ENCODE measurements at regions of chr17 and their contacts with region 1.

Region 1: DNA sequence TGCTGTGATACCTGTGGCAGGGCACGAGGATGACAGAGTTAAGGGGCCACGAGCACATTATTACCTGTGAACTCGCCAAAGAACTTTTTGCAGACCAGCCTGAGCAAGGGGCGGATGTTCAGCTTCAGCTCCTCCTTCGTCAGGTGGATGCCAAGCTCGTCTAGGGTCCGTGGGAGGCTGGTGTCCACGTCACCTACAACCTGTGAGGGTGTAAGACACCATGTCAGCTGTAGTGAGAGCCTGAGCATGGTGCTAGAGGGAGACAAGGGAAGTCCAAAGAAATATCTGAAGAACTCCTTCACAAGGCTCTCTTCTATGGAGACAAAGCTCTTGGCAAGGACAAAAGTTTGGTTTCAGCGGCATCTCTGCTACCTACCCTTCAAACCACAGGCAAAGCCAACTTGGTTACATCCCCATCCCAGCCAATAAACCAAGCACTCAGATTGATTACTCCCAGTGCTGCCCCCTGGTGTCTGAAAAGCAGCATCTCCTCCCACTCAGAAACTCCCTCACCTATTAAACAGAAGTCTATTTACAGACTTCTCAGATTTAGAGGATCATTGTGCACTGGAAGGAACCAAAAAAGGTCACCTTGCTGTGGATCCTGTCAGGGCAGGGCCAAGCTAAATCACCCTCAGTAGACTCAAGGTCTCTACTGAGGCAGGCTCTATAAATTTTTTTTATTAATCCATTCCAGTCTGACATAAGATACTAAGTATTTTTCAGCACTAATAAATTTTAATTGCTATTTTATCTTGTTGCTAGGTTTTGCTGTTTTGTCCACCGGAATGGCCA is 17.4 kb downstream of the HIGD1B start:
- DNase-seq: peak; percentile 82 to 88
- ATAC-seq: peak; percentile 80 to 88
- H3K4me3 ChIP-seq: no peak overlapping the region
- H3K27ac ChIP-seq: no peak overlapping the region
- H3K4me1 ChIP-seq: no peaks in the 10 kb centered on the region
- CTCF ChIP-seq: peak; percentile 98
- EP300 ChIP-seq: no peak
- POLR2A ChIP-seq: no peak
- RAD21 ChIP-seq: peak; percentile 77 to 78

Region 2: DNA sequence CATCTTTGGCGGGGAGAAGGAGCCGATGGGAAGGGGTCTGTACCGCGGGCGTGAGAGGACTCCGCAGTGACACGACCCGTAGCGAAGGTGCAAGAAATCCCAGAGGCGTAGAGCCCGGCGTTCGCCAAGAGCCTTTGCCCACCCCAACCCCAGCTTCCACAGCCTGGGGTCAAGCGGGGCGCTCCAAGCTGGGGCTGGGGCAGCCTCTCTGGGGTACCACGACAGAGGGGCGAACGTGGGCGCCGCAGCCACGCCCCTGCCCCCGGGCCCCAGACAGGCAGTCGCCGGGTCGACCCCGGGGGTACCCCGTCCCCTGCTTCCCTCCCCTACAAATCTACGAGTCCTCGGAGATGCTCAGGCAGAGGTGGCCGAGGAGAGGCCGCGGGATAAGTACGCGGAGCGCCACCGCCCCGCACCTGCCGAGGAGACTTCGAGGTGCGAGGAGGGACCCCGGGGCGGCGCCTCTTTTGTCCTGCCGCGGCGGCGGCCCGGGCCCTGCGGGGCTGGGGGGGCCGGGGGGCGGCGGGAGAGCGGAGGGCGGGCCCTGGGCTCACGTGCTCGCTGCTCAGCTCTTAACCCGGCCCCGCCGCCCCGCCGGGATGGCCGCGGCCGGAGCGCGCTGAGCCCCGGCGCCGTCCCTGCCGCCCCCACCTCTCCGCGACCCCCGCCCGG is 106.5 kb before region 1 on chr17 and contains the start of gene ADAM11:
- CTCF ChIA-PET with region 1: interaction called, 1,787 read pairs
- POLR2A ChIA-PET with region 1: no interaction called
- DNase-seq: peak in 1 of 2 experiments; percentile 74
- ATAC-seq: peak; percentile 39 to 58
- H3K4me3 ChIP-seq: peak within 1 kb of the TSS; percentile 64
- H3K27ac ChIP-seq: peak within 1 kb of the TSS; percentile 62 to 89; a peak in 5 of 6 replicates
- H3K4me1 ChIP-seq: peaks cover 10% of the 10 kb centered on the region; the same call in 1 of the 3 replicates
- CTCF ChIP-seq: no peak
- EP300 ChIP-seq: no peak
- POLR2A ChIP-seq: no peak
- RAD21 ChIP-seq: no peak
- polyA plus RNA-seq, gene ADAM11: 0.75 and 0.79 TPM in 2 replicates

Region 3: DNA sequence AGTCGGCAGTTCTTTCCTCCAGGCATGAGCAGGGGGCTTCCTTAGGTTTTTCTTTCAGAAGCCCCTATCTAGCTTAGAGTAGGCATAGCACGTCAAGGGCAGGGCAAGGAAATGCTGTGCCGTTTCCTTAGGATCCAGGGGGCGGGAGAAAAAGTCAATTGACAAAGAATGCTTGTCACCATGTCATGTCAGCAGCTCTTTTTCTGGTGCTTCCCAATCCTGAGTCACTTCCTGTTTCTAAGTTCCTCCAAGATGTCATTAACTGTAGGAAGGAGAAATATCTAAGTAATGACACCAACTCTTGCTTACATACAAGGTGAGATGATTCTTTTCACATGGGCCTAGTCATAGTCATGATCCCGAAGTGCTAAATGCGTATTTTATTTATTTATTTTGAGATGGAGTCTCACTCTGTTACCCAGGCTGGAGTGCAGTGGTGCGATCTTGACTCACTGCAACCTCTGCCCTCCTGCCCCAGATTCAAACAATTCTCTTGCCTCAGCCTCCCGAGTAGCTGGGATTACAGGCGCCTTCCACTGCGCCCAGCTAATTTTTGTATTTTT is 70.1 kb before region 1 on chr17:
- CTCF ChIA-PET with region 1: interaction called, 1,787 read pairs
- POLR2A ChIA-PET with region 1: no interaction called
- DNase-seq: peak; percentile 56 to 84
- ATAC-seq: peak; percentile 81 to 83
- H3K4me3 ChIP-seq: no peak overlapping the region
- H3K27ac ChIP-seq: peak overlapping the region; percentile 28 to 78; a peak in 5 of 6 replicates
- H3K4me1 ChIP-seq: peaks cover 18% of the 10 kb centered on the region
- CTCF ChIP-seq: no peak
- EP300 ChIP-seq: no peak
- POLR2A ChIP-seq: no peak
- RAD21 ChIP-seq: no peak

Region 4: GRCh38 chr17:44812263-44812662 is 52.8 kb before region 1 on chr17:
- CTCF ChIA-PET with region 1: interaction called, 25 read pairs
- POLR2A ChIA-PET with region 1: no interaction called
- DNase-seq: no peak
- ATAC-seq: no peak
- H3K4me3 ChIP-seq: no peak overlapping the region
- H3K27ac ChIP-seq: no peak overlapping the region
- H3K4me1 ChIP-seq: peaks cover 20% of the 10 kb centered on the region
- CTCF ChIP-seq: no peak
- EP300 ChIP-seq: no peak
- POLR2A ChIP-seq: no peak
- RAD21 ChIP-seq: no peak

Region 5: DNA sequence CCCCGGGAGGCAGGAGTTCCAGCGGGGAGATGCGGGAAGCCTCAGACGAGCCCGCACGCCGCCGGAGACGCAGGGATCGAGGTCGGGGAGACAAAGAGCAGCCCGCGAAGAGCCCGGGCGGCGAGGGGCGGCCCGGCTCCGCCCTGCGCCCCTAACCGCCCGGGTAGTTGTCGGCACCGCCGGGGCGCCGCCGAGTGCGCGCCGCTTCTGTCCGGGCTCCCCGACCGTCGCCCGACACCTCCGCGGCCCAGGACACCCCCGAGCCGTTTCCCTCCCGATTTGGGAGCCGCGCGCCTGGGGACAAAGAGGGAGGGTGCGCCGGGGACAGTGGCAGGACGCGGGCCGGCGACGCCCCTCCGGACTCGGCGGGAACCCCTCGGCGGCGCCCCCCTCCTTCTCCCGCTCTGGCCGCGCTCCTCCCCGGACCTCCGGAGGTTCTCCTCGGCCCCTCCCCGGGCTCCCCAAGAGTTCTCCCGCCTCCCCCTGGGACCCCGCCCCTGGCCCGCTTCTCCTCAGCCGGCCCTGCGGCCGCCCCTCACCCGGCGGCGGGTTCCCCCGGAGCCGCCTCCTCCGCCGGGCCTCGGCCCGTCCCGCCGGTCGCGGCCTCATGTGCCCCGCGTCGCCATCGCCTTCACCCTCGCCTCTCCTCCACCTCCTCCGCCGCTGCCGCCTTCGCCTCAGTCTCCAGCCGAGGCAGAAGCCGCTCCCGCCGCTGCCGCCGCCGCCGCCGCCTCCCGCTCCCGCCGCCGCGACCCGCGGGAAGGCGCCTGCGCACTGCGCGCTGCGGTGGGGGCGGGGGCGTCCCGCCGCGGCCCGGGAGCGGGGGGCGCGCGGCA is 35.3 kb before region 1 on chr17 and contains the start of gene GJC1:
- CTCF ChIA-PET with region 1: interaction called, 21 read pairs
- POLR2A ChIA-PET with region 1: no interaction called
- DNase-seq: peak; percentile 48 to 49
- ATAC-seq: peak; percentile 73 to 76
- H3K4me3 ChIP-seq: peak within 1 kb of the TSS; percentile 87
- H3K27ac ChIP-seq: peak within 1 kb of the TSS; percentile 77 to 95
- H3K4me1 ChIP-seq: peaks cover 18% of the 10 kb centered on the region
- CTCF ChIP-seq: no peak
- EP300 ChIP-seq: no peak
- POLR2A ChIP-seq: peak; percentile 72
- RAD21 ChIP-seq: no peak
- polyA plus RNA-seq, gene GJC1: 22.1 and 30.4 TPM in 2 replicates

Region 6: GRCh38 chr17:44844390-44844830 is 20.7 kb before region 1 on chr17:
- CTCF ChIA-PET with region 1: interaction called, 211 read pairs
- POLR2A ChIA-PET with region 1: no interaction called
- DNase-seq: no peak
- ATAC-seq: peak; percentile 10 to 35; a peak in 4 of 6 replicates
- H3K4me3 ChIP-seq: no peak overlapping the region
- H3K27ac ChIP-seq: no peak overlapping the region
- H3K4me1 ChIP-seq: no peaks in the 10 kb centered on the region
- CTCF ChIP-seq: no peak
- EP300 ChIP-seq: no peak
- POLR2A ChIP-seq: no peak
- RAD21 ChIP-seq: no peak

Region 7: GRCh38 chr17:44892250-44892649 is 27.2 kb after region 1 on chr17:
- CTCF ChIA-PET with region 1: interaction called, 15 read pairs
- POLR2A ChIA-PET with region 1: no interaction called
- DNase-seq: no peak
- ATAC-seq: no peak
- H3K4me3 ChIP-seq: no peak overlapping the region
- H3K27ac ChIP-seq: no peak overlapping the region
- H3K4me1 ChIP-seq: peaks cover 26% of the 10 kb centered on the region
- CTCF ChIP-seq: no peak
- EP300 ChIP-seq: no peak
- POLR2A ChIP-seq: no peak
- RAD21 ChIP-seq: no peak